Activated CD4-positive, alpha-beta T cell treated with anti-CD3 and anti-CD28 coated beads for 36 hours (primary cell): ENCODE measurements at regions of chr1 and their contacts with region 1.

Region 1: DNA sequence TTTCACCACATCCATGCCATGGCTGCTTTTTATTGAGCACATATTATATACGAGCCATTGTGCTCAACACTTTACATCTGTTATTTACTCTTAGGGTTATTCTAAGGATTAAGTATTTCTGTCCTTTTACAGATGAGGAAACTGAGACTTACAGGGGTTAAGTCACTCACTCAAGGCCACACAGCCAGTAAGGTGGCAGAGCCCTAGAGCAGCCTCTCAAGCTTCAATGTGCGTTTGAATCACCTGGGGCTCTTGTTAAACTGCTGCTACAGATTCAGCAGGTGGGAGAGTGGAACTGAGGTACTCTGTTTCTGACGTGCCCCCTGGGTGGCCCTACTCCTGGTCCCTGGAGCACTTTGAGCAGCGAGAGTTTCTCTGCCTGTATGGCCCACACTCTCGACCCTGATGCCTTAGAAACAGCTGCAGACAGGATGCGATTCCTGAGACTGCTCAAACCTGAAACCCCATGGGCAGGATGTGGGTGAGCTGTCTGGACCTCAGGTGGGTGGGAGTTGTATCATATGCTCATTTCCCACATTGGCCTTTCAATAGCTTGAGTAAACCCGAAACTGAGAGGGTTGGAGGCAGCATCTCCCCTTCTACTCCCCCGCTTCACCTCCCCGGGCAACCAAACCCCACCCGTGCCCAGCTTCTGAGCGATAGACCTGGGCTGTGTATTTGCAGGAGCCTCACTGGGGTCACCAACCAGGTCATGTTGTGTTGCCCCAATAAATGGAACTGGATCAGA is 59.3 kb downstream of the MAN1C1 start:
- DNase-seq: peak; percentile 94
- ATAC-seq: peak; percentile 85
- H3K4me3 Mint-ChIP-seq: peak overlapping the region; percentile 50
- H3K27ac Mint-ChIP-seq: peak overlapping the region; percentile 78
- H3K4me1 Mint-ChIP-seq: peaks cover 89% of the 10 kb centered on the region
- H3K27me3 Mint-ChIP-seq: peaks cover 2% of the 10 kb centered on the region

Region 2: DNA sequence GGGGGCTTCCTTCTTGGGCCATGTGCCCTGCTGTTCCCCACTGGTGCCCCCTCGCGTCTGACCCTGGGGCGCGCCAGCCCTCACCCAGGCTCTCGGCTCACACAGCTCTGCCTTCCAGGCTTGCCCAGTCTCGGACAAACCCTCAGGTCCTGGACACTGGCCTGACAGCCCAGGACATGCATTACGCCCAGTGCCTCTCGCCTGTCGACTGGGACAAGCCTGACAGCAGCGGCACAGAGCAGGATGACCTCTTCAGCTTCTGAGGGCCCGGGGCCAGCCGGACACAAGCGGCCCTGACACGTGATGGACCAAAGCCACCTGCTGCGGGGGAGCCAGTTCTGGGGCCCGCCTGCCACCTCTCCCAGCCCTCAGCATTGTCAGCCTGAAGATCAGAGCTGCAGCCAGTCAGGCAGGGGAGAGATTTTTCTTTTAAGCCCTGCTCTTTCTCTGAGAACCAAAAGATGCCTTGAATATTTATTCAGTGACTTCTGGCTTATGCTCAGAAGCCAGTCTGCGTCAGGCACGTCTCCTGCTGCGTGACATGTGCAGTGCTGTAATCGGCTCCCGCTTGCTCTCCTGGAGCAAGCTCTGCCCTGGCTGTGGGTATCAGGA is 109.1 kb before region 1 on chr1:
- CTCF ChIA-PET with region 1: no interaction called
- POLR2A ChIA-PET with region 1: no interaction called
- intact Hi-C with region 1: loop called in 1 of 2 experiments (anchors 5 kb)
- DNase-seq: peak; percentile 68
- ATAC-seq: peak; percentile 18
- H3K4me3 Mint-ChIP-seq: peak overlapping the region; percentile 9
- H3K27ac Mint-ChIP-seq: peak overlapping the region; percentile 69
- H3K4me1 Mint-ChIP-seq: peaks cover 82% of the 10 kb centered on the region
- H3K27me3 Mint-ChIP-seq: no peaks in the 10 kb centered on the region

Region 3: DNA sequence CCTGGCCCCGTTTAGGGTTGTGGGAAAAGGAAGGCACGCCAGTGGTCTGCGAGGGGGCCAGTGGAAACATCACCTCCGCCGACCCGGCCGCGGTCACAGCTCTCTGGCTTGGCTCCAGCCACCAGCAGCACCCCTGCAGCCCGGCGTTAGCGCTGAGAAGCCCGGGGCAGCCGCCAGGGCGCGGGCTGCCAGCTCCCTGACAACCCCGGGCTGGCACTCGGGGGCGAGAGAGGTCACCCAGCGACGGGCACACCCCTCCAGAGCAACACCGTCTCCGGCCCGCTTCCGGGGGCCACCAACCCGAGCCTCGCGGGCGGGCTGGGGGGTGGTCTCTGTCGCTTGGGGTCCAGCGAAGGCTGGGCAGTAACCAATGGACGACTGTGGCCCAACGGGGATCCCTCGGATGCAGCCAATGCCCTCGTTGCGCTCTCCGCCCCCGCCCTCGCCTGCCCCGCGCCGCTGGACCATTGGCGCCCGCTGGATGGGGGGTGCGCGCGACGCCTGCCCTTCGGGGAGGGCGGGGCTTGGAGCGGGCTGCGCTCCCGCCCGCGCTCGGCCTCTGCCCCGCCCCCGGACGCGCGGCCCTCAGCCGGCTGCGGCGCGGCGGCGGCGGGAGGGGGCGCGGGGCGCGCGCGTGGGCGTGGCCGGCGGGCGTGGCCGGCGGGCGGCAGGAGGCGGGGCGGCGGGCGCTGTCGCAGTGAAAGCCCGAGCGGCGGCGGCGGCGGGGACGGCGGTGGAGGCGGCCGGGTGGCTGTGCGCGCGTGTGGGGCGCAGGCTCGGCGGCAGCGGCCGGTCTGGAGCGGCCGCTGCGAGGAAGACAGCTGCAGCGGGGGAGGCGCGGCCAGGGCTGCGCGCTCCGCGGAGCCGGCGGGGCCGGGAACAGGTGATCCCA is 59.6 kb before region 1 on chr1 and contains the start of gene MAN1C1:
- CTCF ChIA-PET with region 1: interaction called, 30 read pairs
- POLR2A ChIA-PET with region 1: interaction called, 17 read pairs
- intact Hi-C with region 1: loop called in 1 of 2 experiments (anchors 1 kb)
- DNase-seq: peak; percentile 85
- ATAC-seq: peak; percentile 60
- H3K4me3 Mint-ChIP-seq: peak within 1 kb of the TSS; percentile 76
- H3K27ac Mint-ChIP-seq: peak within 1 kb of the TSS; percentile 52
- H3K4me1 Mint-ChIP-seq: peaks cover 51% of the 10 kb centered on the region
- H3K27me3 Mint-ChIP-seq: peaks cover 11% of the 10 kb centered on the region
- total RNA-seq, gene MAN1C1: 10.0 to 10.1 TPM

Region 4: GRCh38 chr1:25642574-25643108 is 33.3 kb before region 1 on chr1:
- CTCF ChIA-PET with region 1: interaction called, 8 read pairs
- POLR2A ChIA-PET with region 1: interaction called, 11 read pairs
- intact Hi-C with region 1: loop called (anchors 1 kb)
- DNase-seq: peak; percentile 85
- ATAC-seq: peak; percentile 90
- H3K4me3 Mint-ChIP-seq: peak overlapping the region; percentile 69
- H3K27ac Mint-ChIP-seq: peak overlapping the region; percentile 85
- H3K4me1 Mint-ChIP-seq: peaks cover 80% of the 10 kb centered on the region
- H3K27me3 Mint-ChIP-seq: no peaks in the 10 kb centered on the region

Region 5: DNA sequence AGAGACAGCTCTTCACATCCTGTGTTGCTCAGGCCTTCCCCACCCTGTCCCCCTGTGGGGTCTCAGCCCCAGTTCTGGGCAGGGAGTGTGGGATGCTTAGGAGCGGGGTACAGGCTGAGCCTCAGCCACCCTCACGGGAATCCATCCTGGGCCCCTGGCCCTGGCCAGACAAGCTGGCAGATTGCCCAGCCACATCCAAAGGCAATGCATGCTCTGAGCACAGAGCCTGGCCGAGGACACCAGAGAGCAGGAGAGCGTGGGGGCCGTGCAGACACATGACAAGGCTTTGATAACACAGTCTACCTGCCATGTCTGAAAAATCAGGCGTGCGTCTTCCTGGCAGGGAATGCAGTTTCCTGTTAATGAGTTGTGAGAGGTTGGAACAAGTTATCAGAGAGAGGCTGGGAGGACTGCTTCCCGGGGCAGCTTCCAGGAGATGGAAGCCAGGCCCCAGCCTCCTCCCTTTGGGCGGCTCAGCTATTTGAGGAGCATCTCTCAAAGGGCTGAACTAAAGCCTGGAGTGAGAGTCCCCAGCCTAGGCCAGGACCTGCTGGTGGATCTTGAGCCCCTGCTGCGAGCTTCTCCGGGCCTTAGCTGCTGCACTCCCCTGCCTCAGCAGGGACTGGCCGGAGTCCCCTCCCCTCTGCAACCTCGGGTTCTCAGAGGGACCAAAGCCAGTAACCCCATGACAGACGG is 51.9 kb after region 1 on chr1:
- CTCF ChIA-PET with region 1: interaction called, 5 read pairs
- POLR2A ChIA-PET with region 1: no interaction called
- intact Hi-C with region 1: loop called (anchors 1 kb)
- DNase-seq: no peak
- ATAC-seq: peak; percentile 3
- H3K4me3 Mint-ChIP-seq: no peak overlapping the region
- H3K27ac Mint-ChIP-seq: peak overlapping the region; percentile 32
- H3K4me1 Mint-ChIP-seq: peaks cover 73% of the 10 kb centered on the region
- H3K27me3 Mint-ChIP-seq: no peaks in the 10 kb centered on the region